ENCODE measurements at regions of chr1 and their contacts with region 1.

Region 1: GRCh38 chr1:201511941-201512539 is 5.1 kb upstream of the CSRP1 start:
- DNase-seq: peak; percentile 61 to 90 (median 77)

Region 2: GRCh38 chr1:201447911-201448871 is 63.8 kb before region 1 on chr1:
- intact Hi-C with region 1: loop called (anchors 5 kb)
- DNase-seq: peak; percentile 65 to 97 (median 89)

Region 3: DNA sequence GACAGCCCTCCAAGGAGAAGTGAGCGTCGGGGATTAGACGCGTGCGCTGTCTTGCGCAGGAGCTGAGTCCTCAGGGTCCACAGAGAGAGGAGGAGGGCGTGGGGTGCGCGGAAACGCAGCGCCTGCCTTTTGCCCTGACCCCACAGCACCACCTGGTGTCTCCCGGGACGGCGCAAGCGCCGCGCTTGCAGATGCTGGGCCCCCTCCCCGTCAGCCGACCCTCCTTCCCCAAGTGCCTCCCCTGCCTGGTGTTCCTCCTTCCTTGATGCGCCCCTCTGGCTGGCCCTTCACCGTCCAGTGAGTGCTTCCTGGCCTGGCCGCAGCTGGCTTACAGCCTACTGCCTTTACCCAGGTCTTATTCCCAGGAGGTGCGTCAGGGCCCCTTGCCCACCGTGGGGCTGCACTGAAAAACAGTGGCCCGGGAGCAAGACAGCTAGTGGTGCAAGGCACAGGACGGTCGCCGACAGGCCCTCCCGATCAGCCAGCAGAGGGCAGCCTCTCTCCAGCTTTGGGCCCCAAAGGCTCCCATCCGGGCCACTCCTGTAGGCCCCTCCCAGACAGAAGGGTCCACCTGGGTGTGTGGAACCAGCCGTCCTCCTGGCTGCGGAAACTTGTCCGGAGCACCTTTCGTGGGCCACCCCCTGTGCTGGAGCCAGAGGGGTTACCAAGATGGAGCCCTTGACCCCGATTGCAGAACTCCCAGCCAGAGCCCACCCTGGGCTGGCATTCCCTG is 30.1 kb before region 1 on chr1:
- intact Hi-C with region 1: loop called (anchors 1 kb)
- DNase-seq: peak; percentile 79 to 96 (median 90)

Measured in head of caudate nucleus (tissue), 42 donors.